ENCODE measurements at regions of chr17 and their contacts with region 1.

Region 1: GRCh38 chr17:49798182-49798581 is 9.7 kb downstream of the KAT7 start:
- DNase-seq: no peak
- H3K4me3 ChIP-seq: no peak overlapping the region
- H3K4me3 Mint-ChIP-seq: no peak overlapping the region
- H3K27ac Mint-ChIP-seq: no peak overlapping the region
- H3K4me1 ChIP-seq: no peaks in the 10 kb centered on the region
- H3K4me1 Mint-ChIP-seq: no peaks in the 10 kb centered on the region
- H3K27me3 ChIP-seq: no peaks in the 10 kb centered on the region
- H3K27me3 Mint-ChIP-seq: no peaks in the 10 kb centered on the region
- CTCF ChIP-seq: no peak

Region 2: DNA sequence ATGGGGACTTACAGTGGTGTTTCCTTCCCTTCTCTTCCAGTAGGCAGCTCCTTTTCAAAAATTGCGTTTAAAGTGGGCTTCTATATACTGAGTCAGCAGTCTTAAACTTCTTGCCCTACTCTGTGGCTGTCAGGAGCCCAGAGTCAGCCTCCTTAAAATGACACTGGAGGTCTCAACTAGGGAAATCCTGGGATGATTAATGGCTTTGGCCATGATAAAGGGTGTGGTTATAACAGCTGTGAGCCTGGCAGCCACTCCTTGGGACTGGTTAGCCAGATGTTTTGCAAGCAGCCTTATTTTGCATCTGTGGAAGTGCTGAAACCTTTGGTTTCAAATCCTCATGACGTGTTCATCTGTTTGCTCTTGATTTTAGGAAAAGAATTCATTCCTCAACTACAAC is 24.6 kb after region 1 on chr17:
- CTCF ChIA-PET with region 1: no interaction called
- POLR2A ChIA-PET with region 1: no interaction called
- intact Hi-C with region 1: loop called (anchors 2 kb)
- DNase-seq: no peak
- H3K4me3 ChIP-seq: no peak overlapping the region
- H3K4me3 Mint-ChIP-seq: no peak overlapping the region
- H3K27ac Mint-ChIP-seq: no peak overlapping the region
- H3K4me1 ChIP-seq: 0 out of 2 replicates have a peak, but pooled peaks cover 5% of the 10 kb centered on the region
- H3K4me1 Mint-ChIP-seq: peaks cover 10% of the 10 kb centered on the region
- H3K27me3 ChIP-seq: no peaks in the 10 kb centered on the region
- H3K27me3 Mint-ChIP-seq: no peaks in the 10 kb centered on the region
- CTCF ChIP-seq: no peak

Measured in Caco-2 (cell line).